Endothelial cell of umbilical vein (primary cell): ENCODE measurements at regions of chr11 and their contacts with region 1.

Region 1: DNA sequence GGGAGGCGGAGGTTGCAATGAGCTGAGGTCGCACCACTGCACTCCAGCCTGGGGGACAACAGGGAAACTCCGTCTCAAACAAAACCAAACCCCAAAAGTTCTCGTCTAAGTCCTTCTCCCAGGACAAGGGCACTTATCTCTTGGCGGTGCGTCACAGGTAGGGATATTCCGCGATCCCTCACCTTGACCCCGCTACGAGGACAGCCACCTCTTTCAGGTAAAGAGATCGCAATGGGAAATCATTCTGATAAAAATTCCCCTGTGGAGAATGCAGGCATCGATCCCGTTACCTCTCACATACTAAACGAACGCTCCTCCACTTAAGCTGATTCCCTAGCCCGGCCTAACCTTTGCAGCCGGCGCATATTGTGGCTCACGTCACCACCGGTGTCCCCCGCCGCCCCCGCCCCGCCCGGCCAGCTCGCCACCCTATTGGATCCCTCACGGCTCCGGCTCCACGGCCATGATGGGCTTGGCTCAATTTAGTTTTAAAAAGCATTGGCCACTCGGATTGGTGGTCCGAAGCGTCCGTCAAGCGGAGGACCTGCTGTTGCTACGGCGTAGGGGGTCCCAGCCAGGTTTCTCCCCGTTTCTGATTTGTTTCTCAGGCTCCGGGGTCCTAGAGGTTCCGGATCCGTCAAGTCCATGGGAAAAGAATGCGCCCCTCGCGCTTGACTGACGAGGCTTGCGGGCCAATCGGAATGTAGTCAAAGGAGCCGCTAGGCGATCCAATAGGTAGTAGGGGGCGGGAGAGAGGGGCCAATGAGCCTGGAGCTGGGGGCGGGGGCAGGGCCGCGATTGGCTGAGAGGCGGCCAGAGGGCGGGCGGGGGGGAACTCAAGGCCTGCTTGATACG is 439 bp upstream of the PPP6R3 start:
- DNase-seq: peak; percentile 100
- H3K4me3 ChIP-seq: peak overlapping the region; percentile 82 to 84 (median 83)
- H3K27ac ChIP-seq: peak overlapping the region; percentile 96
- H3K4me1 ChIP-seq: peaks cover 20% of the 10 kb centered on the region
- H3K27me3 ChIP-seq: peaks cover 0 to 3% of the 10 kb centered on the region in 2 experiments
- CTCF ChIP-seq: no peak
- POLR2A ChIP-seq: no peak

Region 2: DNA sequence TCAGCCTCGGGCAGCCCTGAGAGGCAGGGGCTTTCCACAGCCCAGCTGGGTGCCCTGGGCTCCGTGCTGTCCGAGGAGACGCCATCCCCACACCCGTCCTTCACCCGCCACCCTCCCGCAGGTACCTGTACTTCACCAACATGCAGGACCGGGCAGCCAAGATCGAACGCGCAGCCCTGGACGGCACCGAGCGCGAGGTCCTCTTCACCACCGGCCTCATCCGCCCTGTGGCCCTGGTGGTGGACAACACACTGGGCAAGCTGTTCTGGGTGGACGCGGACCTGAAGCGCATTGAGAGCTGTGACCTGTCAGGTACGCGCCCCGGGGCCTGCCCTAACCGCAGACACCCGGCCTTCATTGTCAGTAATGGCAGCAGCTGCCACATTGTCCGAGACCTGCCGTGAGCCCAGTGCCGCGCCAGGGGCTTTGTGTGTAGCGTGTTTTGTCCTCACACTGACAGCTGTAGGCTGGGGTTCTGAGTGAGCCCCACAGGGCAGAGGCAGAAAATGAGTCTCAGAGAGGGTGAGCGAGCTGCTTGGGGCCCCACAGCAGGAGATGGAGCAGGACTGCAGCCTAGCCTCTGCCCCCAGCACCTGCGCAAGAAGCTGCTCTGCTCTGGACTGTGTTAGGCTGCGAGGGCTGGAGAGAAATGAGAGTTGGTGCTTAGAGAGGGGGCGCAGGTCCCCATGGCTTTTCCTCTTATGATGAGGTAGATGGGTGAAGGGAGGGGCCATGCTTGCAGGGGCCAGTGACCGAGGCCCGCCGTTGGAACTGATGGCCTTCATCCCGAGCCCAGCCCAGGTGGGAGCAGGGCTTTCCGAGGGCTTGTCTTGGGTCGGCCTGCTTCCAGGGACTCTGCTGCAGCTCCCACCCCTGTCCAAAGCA is 34.9 kb before region 1 on chr11:
- CTCF ChIA-PET with region 1: no interaction called
- POLR2A ChIA-PET with region 1: no interaction called
- dilution Hi-C with region 1: no loop called
- intact Hi-C with region 1: no loop called
- DNase-seq: no peak
- H3K4me3 ChIP-seq: no peak overlapping the region
- H3K27ac ChIP-seq: no peak overlapping the region
- H3K4me1 ChIP-seq: no peaks in the 10 kb centered on the region
- H3K27me3 ChIP-seq: no peaks in the 10 kb centered on the region
- CTCF ChIP-seq: no peak
- POLR2A ChIP-seq: no peak

Region 3: GRCh38 chr11:68480852-68481510 is 20.9 kb after region 1 on chr11:
- CTCF ChIA-PET with region 1: interaction called, 3 read pairs
- POLR2A ChIA-PET with region 1: interaction called, 11 read pairs
- dilution Hi-C with region 1: no loop called
- intact Hi-C with region 1: no loop called
- DNase-seq: no peak
- H3K4me3 ChIP-seq: no peak overlapping the region
- H3K27ac ChIP-seq: no peak overlapping the region
- H3K4me1 ChIP-seq: no peaks in the 10 kb centered on the region
- H3K27me3 ChIP-seq: no peaks in the 10 kb centered on the region
- CTCF ChIP-seq: no peak
- POLR2A ChIP-seq: no peak

Region 4: DNA sequence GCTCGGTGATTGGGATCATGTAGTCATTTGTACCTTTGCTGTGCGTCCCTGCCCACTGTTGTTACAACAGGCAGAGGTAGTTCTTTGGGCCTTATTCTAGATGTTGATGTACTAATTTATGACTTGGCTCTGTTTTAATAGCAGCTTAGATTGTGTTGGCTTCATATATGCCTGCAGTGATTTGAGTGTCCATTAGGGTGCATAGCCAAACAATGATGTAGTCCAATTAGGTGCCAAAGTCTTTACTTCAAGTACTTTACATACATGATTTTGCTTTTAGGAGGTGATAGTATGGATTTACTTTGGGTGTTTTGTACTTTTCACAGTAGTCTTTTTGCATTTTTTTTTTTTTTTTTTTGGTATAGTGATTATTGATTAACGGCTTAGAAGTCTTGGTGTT is 46.8 kb after region 1 on chr11:
- CTCF ChIA-PET with region 1: no interaction called
- POLR2A ChIA-PET with region 1: no interaction called
- dilution Hi-C with region 1: no loop called
- intact Hi-C with region 1: loop called (anchors 2 kb)
- DNase-seq: no peak
- H3K4me3 ChIP-seq: no peak overlapping the region
- H3K27ac ChIP-seq: no peak overlapping the region
- H3K4me1 ChIP-seq: peaks cover 18% of the 10 kb centered on the region
- H3K27me3 ChIP-seq: no peaks in the 10 kb centered on the region
- CTCF ChIP-seq: no peak
- POLR2A ChIP-seq: no peak

Region 5: GRCh38 chr11:68525930-68526329 is 65.8 kb after region 1 on chr11:
- CTCF ChIA-PET with region 1: interaction called, 6 read pairs
- POLR2A ChIA-PET with region 1: no interaction called
- dilution Hi-C with region 1: no loop called
- intact Hi-C with region 1: loop called (anchors 5 kb)
- DNase-seq: peak; percentile 76
- H3K4me3 ChIP-seq: no peak overlapping the region
- H3K27ac ChIP-seq: peak overlapping the region; percentile 35
- H3K4me1 ChIP-seq: peaks cover 50% of the 10 kb centered on the region
- H3K27me3 ChIP-seq: no peaks in the 10 kb centered on the region
- CTCF ChIP-seq: no peak
- POLR2A ChIP-seq: no peak

Region 6: DNA sequence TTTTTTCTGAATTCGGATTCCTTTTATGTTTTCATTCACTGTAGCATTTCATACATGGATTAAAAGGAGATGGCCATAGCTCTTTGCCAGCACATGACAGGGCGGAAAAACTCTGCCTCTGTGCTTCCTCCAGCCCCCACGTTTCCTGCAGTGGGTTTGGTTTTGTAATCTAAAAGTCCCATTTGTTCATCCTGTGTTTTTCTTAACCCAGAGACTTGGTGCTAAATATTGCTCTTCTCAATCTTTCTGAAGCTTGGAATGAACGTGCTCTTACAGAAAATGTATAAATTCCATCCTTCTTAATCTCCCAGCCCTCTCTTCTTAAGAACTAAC is 90.3 kb after region 1 on chr11:
- CTCF ChIA-PET with region 1: interaction called, 3 read pairs
- POLR2A ChIA-PET with region 1: no interaction called
- dilution Hi-C with region 1: no loop called
- intact Hi-C with region 1: loop called (anchors 5 kb)
- DNase-seq: peak; percentile 79
- H3K4me3 ChIP-seq: no peak overlapping the region
- H3K27ac ChIP-seq: no peak overlapping the region
- H3K4me1 ChIP-seq: peaks cover 20% of the 10 kb centered on the region
- H3K27me3 ChIP-seq: no peaks in the 10 kb centered on the region
- CTCF ChIP-seq: no peak
- POLR2A ChIP-seq: no peak

Region 7: DNA sequence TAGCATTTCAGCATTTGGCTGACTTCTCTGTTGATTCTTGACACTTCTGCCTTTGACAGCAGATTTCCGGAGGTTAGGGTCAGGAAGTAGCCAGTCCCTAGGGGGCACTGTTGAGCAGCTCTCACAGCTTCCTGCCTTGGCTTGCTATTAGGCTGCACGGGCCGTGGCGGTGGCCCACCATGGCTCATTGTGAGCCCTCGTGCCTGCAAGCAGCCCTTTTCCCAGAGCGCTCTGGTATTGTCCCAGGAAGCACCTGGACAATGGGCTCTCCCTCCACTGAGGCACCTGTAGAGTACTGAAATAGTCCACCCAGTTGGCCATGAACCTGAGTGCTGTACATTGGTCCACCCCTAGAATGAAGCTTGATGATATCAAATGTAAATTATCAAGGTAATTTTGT is 124.0 kb after region 1 on chr11:
- CTCF ChIA-PET with region 1: interaction called, 4 read pairs
- POLR2A ChIA-PET with region 1: no interaction called
- dilution Hi-C with region 1: no loop called
- intact Hi-C with region 1: loop called (anchors 5 kb)
- DNase-seq: peak; percentile 18
- H3K4me3 ChIP-seq: no peak overlapping the region
- H3K27ac ChIP-seq: no peak overlapping the region
- H3K4me1 ChIP-seq: peaks cover 13% of the 10 kb centered on the region
- H3K27me3 ChIP-seq: no peaks in the 10 kb centered on the region
- CTCF ChIP-seq: peak; percentile 55 to 59
- POLR2A ChIP-seq: no peak